ENCODE measurements at regions of chr5 and their contacts with region 1.

Region 1: DNA sequence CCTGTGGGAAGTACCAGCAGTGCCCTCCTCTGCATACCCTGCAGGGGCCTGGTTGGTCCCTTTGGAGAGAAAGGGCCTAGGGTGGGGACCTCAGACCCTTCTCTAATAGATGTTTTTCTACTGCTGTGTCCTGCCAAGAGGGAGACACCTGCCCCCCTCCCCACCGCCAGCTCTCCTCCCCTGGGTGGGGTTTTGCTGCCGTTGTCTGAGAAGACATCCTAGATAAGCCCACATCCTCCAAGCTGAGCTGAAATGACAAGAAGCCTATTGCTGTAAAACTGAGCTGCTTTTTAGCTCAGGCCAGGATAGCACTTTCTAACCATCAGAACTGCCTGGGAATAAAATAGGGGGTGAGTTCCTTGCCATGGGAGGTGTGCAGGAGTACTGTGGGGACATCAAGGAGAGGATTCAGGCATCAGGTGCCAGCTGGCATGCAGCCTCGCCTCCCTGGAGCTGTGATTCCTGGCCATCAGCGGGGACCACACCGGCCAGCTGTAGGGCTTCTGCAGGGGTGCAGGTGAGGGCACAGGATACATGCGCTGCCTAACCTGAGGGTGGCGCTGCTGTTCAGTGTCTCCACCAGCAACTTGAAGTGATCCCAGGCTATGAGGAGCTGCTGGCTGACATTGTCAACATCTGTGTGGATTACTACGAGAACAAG is 37.9 kb downstream of the CYFIP2 start:
- DNase-seq: peak; percentile 71
- ATAC-seq: peak; percentile 46
- H3K4me3 Mint-ChIP-seq: peak overlapping the region; percentile 34
- H3K27ac Mint-ChIP-seq: peak overlapping the region; percentile 88
- H3K4me1 Mint-ChIP-seq: peaks cover 61% of the 10 kb centered on the region
- H3K27me3 Mint-ChIP-seq: no peaks in the 10 kb centered on the region

Region 2: GRCh38 chr5:157265714-157266285 is 38.0 kb before region 1 on chr5 and contains the start of gene CYFIP2:
- CTCF ChIA-PET with region 1: interaction called, 10 read pairs
- POLR2A ChIA-PET with region 1: interaction called, 6 read pairs
- DNase-seq: peak; percentile 91
- ATAC-seq: peak; percentile 84
- H3K4me3 Mint-ChIP-seq: peak within 1 kb of the TSS; percentile 89
- H3K27ac Mint-ChIP-seq: peak within 1 kb of the TSS; percentile 99
- H3K4me1 Mint-ChIP-seq: peaks cover 62% of the 10 kb centered on the region
- H3K27me3 Mint-ChIP-seq: no peaks in the 10 kb centered on the region
- total RNA-seq, gene CYFIP2: 512 to 516 TPM

Region 3: DNA sequence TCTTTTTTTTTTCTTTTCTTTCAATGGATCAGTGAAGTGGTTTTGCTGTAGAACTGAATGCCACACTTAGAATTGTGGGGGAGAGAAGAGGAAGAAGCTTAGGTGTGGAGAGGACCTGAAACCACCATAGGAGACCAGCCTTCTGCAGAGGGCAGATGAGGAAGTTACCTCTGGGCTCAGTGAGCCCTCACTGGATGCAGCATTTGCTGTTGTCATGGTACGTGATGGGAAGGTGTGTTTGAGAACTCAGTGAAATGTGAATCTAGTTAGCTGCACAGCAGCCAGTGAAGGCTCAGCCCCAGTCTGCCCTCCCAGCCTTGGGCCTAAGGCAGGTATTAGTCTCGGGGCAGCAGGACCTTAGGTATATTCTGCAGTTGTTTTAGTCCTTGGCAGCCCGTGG is 20.4 kb before region 1 on chr5:
- CTCF ChIA-PET with region 1: interaction called, 10 read pairs
- POLR2A ChIA-PET with region 1: interaction called, 4 read pairs
- DNase-seq: peak; percentile 68
- ATAC-seq: peak; percentile 96
- H3K4me3 Mint-ChIP-seq: peak overlapping the region; percentile 1
- H3K27ac Mint-ChIP-seq: peak overlapping the region; percentile 62
- H3K4me1 Mint-ChIP-seq: peaks cover 84% of the 10 kb centered on the region
- H3K27me3 Mint-ChIP-seq: no peaks in the 10 kb centered on the region